ENCODE measurements at regions of chr17 and their contacts with region 1.

Region 1: DNA sequence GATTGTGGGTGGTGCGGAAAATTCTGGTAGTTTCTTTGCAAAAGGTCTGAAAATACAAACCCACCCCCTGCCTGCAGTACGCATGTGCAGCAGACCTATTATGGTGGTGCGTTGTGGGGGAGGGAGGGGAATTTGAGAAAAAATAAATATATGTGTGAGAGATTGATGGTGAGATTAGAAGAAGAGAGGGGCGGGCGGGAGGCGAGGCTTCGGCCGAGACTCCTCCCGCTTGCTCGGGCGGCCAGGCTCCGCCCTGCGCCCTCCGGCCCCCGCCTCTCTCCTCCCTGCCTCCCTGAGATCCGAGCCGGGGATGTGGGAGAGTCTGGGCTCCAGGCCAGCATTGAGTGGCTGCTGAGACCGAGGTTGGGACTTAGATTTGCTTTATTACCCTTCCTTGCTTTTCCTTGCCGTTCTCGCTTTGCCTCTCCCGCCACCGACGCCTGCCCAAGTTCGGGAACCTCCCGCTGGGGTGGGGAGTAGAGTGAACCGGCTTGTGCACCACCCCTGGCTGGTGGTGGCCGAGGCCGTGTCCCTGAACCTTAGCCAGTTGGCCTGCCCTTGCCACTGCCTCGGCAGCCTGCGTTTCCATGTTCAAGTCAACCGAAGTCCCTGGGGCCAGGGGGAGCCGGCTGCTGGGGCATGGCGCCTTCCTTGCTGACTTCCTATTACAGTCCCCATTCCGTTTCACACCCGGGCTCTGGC is 956 bp upstream of the CHD3 start:
- DNase-seq: peak; percentile 95
- H3K4me3 Mint-ChIP-seq: no peak overlapping the region
- H3K27ac Mint-ChIP-seq: no peak overlapping the region
- H3K4me1 Mint-ChIP-seq: no peaks in the 10 kb centered on the region
- H3K27me3 Mint-ChIP-seq: no peaks in the 10 kb centered on the region

Region 2: DNA sequence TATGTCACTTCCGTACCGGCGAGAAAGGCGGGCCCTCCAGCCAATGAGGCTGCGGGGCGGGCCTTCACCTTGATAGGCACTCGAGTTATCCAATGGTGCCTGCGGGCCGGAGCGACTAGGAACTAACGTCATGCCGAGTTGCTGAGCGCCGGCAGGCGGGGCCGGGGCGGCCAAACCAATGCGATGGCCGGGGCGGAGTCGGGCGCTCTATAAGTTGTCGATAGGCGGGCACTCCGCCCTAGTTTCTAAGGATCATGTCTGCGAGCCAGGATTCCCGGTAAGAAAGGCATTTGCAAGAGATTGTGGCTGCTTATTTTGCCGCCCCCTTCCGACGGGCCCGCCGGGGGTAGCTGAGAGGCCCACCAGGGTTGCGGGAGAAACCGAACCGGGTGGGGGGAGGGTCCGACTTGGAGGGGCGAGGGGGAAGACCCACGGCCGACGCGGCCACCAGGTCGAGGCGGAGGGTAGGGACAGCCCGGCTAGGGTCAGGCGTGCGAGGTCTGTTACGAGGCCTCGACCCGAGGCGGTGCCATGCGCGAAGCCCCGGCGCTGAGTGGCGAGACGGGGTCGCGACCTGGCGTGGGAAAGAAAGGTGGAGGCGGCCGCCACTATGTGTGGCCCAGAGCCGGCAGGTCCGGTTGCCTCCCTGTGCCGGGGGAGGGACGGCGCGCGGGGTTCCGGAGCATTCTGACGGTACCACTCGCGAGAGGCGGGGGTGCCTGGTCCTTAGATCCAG is 314.9 kb before region 1 on chr17:
- CTCF ChIA-PET with region 1: no interaction called
- POLR2A ChIA-PET with region 1: no interaction called
- intact Hi-C with region 1: loop called (anchors 2 kb)
- DNase-seq: peak; percentile 100
- H3K4me3 Mint-ChIP-seq: peak overlapping the region; percentile 99
- H3K27ac Mint-ChIP-seq: peak overlapping the region; percentile 100
- H3K4me1 Mint-ChIP-seq: peaks cover 50% of the 10 kb centered on the region
- H3K27me3 Mint-ChIP-seq: peaks cover 2% of the 10 kb centered on the region

Region 3: DNA sequence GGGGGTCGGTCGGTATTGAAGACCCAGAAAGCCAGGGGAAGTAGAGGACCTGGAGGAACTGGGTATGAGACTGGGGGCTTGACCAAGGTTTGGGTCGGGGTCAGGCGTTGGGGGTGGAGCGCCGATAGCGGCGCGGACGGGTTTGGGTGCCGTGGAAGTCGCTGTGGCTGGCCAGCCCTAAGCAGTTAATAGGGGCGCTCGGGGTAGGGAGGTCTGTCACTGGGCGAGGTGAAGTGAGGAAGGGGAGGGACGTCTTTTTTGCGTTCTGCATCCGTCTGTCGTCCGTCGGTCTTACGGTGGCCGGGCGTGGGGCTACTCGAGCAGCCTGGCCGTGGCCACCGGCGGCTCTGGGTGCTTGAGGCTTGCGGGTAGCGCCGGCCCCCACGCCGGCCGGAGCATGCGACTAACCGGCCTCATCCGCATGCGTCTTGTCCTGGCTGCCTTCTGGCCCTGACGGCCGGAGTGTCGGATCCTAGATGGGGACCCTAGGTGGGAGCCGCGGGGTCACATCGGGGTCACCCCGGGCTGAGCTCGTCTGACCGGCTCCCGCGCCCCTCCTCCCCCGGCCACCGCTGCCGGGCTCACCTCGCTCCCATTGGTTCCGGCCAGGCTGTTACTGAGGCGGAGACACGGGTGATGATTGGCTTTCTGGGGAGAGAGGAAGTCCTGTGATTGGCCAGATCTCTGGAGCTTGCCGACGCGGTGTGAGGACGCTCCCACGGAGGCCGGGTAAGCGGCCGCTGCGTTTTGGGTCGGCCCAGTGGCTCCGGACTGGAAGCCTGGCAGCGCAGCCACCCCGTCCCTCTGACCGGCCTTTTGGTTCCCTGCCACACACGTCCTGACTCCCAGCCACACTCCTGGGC is 43.1 kb before region 1 on chr17:
- CTCF ChIA-PET with region 1: no interaction called
- POLR2A ChIA-PET with region 1: interaction called, 3 read pairs
- intact Hi-C with region 1: loop called (anchors 1 kb)
- DNase-seq: peak; percentile 92
- H3K4me3 Mint-ChIP-seq: peak overlapping the region; percentile 85
- H3K27ac Mint-ChIP-seq: peak overlapping the region; percentile 95
- H3K4me1 Mint-ChIP-seq: peaks cover 45% of the 10 kb centered on the region
- H3K27me3 Mint-ChIP-seq: no peaks in the 10 kb centered on the region

Region 4: GRCh38 chr17:7915611-7916382 is 28.2 kb after region 1 on chr17 and contains the start of gene RNF227:
- CTCF ChIA-PET with region 1: interaction called, 3 read pairs
- POLR2A ChIA-PET with region 1: interaction called, 4 read pairs
- intact Hi-C with region 1: loop called (anchors 1 kb)
- DNase-seq: peak; percentile 92
- H3K4me3 Mint-ChIP-seq: peak within 1 kb of the TSS; percentile 85
- H3K27ac Mint-ChIP-seq: peak within 1 kb of the TSS; percentile 86
- H3K4me1 Mint-ChIP-seq: peaks cover 29% of the 10 kb centered on the region
- H3K27me3 Mint-ChIP-seq: no peaks in the 10 kb centered on the region
- total RNA-seq, gene RNF227: 2.7 to 3.3 TPM

Region 5: GRCh38 chr17:7972131-7972785 is 84.6 kb after region 1 on chr17:
- CTCF ChIA-PET with region 1: no interaction called
- POLR2A ChIA-PET with region 1: no interaction called
- intact Hi-C with region 1: no loop called
- DNase-seq: no peak
- H3K4me3 Mint-ChIP-seq: no peak overlapping the region
- H3K27ac Mint-ChIP-seq: no peak overlapping the region
- H3K4me1 Mint-ChIP-seq: no peaks in the 10 kb centered on the region
- H3K27me3 Mint-ChIP-seq: peaks cover 12% of the 10 kb centered on the region

Region 6: DNA sequence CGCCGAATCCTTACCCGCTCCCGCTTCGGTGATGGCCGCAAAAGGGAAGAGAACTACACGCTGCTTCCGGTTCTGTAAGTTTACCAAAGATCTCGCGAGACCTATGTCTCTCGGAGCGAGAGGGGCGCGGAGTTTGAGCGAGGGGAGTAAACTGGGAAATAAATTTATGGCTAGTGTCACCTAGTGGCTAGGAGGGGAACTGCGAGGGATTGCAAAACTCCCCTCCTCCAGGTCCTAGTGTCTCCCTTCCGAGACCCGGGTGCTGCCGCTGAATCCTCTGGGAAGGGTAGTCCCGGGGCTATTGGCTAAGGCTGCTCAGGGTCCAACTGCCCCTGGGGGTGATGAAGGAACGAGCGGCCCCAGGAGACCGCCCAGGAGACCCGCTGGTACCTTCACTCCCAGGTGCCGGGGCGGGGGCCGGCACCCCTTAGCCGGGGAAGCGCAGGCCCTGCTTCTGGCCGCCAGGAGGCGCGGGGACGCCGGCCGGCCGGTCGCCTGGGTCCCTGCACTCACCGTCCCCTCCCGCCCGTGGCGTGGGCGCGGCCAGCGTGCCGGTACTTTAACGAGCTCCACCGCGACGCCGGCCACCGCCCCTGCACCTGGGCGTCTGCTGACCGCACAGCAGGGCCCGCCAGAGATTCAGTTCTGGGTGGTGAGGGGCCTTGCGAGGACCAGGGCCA is 495.6 kb after region 1 on chr17 and contains the start of gene RPL26:
- CTCF ChIA-PET with region 1: no interaction called
- POLR2A ChIA-PET with region 1: no interaction called
- intact Hi-C with region 1: loop called (anchors 2 kb)
- DNase-seq: peak; percentile 97
- H3K4me3 Mint-ChIP-seq: peak within 1 kb of the TSS; percentile 97
- H3K27ac Mint-ChIP-seq: peak within 1 kb of the TSS; percentile 99
- H3K4me1 Mint-ChIP-seq: peaks cover 51% of the 10 kb centered on the region
- H3K27me3 Mint-ChIP-seq: no peaks in the 10 kb centered on the region
- total RNA-seq, gene RPL26: 2,959 to 2,997 TPM

Measured in activated CD4-positive, alpha-beta memory T cell treated with anti-CD3 and anti-CD28 coated beads for 36 hours (primary cell).